Transverse colon (tissue), 4 donors: ENCODE measurements at regions of chr7 and their contacts with region 1.

Region 1: DNA sequence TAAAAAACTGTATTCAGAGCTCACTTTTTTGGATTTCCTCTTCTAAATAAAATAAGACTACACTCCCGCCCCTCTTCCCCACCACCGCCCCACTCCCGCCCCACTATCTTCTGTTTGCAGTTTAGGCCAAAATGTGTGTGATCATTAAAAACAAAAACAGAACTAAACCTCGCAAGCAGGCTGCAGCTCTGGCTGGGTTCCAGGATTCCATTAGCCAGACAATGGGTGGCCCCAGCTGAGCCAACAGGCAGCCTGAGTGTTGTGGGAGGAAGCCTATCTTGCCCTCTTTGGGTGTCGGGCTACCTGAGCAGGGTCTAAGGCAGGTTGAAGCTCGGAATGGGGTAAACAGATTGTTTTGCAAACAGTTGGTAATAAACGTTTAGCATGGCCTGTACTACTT is 41.7 kb downstream of the ARL4A start:
- DNase-seq: peak; percentile 45
- H3K4me3 ChIP-seq: no peak overlapping the region
- H3K27ac ChIP-seq: no peak overlapping the region
- H3K4me1 ChIP-seq: peaks cover 0 to 12% (median 0%) of the 10 kb centered on the region in 4 donors
- H3K27me3 ChIP-seq: no peaks in the 10 kb centered on the region
- CTCF ChIP-seq: no peak
- EP300 ChIP-seq: no peak
- POLR2A ChIP-seq: no peak

Region 2: DNA sequence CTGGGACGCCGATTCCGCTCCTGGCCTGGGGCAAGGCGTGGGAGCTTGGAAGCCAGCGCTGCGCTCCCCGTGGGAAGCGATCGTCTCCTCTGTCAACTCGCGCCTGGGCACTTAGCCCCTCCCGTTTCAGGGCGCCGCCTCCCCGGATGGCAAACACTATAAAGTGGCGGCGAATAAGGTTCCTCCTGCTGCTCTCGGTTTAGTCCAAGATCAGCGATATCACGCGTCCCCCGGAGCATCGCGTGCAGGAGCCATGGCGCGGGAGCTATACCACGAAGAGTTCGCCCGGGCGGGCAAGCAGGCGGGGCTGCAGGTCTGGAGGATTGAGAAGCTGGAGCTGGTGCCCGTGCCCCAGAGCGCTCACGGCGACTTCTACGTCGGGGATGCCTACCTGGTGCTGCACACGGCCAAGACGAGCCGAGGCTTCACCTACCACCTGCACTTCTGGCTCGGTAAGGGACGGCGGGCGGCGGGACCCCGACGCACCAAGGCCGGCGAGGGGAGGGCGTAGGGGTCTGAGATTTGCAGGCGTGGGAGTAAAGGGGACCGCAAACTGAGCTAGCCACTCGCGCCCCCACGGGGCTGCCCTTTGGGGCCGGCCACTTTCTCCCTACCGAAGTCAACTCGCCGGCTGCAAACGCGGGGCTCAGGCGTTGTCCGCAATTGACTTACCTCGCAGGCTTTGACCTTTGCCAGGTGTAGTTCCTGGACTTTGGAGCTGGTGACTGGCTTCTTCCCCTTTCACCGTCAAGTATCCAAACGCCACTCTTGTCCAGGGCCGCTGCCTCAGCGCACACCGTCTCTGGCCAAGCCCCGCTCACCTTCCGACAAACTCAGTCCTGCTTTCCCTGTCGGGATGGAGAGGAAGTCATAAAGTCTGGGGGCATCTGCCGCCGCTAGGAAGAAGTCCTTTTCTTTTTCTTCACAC is 158.3 kb before region 1 on chr7 and contains the start of gene SCIN:
- in situ Hi-C with region 1: no loop called
- intact Hi-C with region 1: loop called (anchors 5 kb)
- DNase-seq: peak; percentile 79
- H3K4me3 ChIP-seq: peak within 1 kb of the TSS; percentile 1 to 59 (median 45)
- H3K27ac ChIP-seq: peak within 1 kb of the TSS; percentile 76 to 80 (median 78)
- H3K4me1 ChIP-seq: peaks cover 8 to 34% (median 23%) of the 10 kb centered on the region in 4 donors
- H3K27me3 ChIP-seq: peaks cover 21% of the 10 kb centered on the region
- CTCF ChIP-seq: no peak
- EP300 ChIP-seq: no peak
- POLR2A ChIP-seq: peak; percentile 73
- total RNA-seq, gene SCIN: 62.3 to 125 (median 86.4) TPM